ENCODE measurements at regions of chr1 and their contacts with region 1.

Region 1: DNA sequence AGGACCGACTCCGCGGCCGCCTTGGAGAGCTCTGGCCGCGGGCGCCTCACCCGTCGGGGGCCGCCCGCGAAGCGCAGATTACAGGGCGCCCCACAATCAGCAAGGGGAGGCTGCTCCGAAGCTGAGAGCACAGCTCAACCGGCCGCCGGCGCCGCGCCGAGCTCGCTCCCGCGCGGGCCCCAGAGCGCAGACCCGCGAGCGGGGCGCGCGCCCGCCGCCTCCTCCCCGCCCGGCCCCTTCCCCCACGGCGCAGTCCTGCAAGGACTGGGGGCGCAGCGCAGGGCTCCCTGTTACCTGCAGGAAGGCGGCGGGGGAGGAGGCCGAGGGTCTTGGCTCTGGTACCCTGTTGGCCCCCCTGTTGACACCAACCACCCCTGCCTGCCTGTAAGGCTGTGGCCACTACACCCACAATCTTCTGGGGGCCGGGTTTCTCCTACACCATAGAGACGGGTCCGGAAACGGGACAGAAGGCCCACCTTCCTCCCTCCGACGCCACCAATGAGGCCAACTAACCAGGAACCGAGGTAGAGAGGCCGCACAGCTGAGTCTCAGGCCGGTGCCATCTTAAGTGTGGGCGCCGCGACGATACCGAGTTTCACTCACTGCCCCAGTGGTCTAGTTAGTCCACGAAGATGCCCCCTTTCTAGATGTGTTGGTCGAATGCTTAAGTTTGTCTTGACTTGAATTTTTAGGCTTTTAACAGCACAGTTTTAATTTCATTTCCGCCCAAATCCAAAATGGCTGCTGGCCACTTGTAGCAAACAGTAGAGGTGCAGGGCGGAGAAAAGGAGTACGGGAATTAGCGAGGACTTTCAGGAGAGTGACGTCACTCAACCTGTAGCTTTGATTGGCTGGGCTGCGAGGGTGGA is at the start of gene SCYL3:
- DNase-seq: peak; percentile 84 to 96
- ATAC-seq: peak; percentile 84 to 95 (median 87)
- H3K4me3 ChIP-seq: peak within 1 kb of the TSS; percentile 94
- H3K4me3 Mint-ChIP-seq: peak within 1 kb of the TSS; percentile 94
- H3K27ac ChIP-seq: peak within 1 kb of the TSS; percentile 91
- H3K27ac Mint-ChIP-seq: peak within 1 kb of the TSS; percentile 100
- H3K4me1 ChIP-seq: peaks cover 20% of the 10 kb centered on the region
- H3K4me1 Mint-ChIP-seq: peaks cover 46 to 49% of the 10 kb centered on the region in 2 donors
- H3K27me3 ChIP-seq: no peaks in the 10 kb centered on the region
- H3K27me3 Mint-ChIP-seq: peaks cover 8 to 12% of the 10 kb centered on the region in 2 donors
- CTCF ChIP-seq: no peak
- total RNA-seq, gene SCYL3: 6.0 to 12.3 (median 7.0) TPM

Region 2: GRCh38 chr1:167936068-167936929 is 1957.4 kb before region 1 on chr1 and contains the start of gene DCAF6:
- intact Hi-C with region 1: loop called (anchors 2 kb)
- DNase-seq: peak; percentile 95 to 99
- ATAC-seq: peak; percentile 81 to 93 (median 84)
- H3K4me3 ChIP-seq: peak within 1 kb of the TSS; percentile 90
- H3K4me3 Mint-ChIP-seq: peak within 1 kb of the TSS; percentile 93
- H3K27ac ChIP-seq: peak within 1 kb of the TSS; percentile 95
- H3K27ac Mint-ChIP-seq: peak within 1 kb of the TSS; percentile 93 to 98
- H3K4me1 ChIP-seq: peaks cover 8% of the 10 kb centered on the region
- H3K4me1 Mint-ChIP-seq: peaks cover 34 to 41% of the 10 kb centered on the region in 2 donors
- H3K27me3 ChIP-seq: no peaks in the 10 kb centered on the region
- H3K27me3 Mint-ChIP-seq: no peaks in the 10 kb centered on the region
- CTCF ChIP-seq: no peak
- total RNA-seq, gene DCAF6: 21.8 to 31.8 (median 27.8) TPM

Region 3: DNA sequence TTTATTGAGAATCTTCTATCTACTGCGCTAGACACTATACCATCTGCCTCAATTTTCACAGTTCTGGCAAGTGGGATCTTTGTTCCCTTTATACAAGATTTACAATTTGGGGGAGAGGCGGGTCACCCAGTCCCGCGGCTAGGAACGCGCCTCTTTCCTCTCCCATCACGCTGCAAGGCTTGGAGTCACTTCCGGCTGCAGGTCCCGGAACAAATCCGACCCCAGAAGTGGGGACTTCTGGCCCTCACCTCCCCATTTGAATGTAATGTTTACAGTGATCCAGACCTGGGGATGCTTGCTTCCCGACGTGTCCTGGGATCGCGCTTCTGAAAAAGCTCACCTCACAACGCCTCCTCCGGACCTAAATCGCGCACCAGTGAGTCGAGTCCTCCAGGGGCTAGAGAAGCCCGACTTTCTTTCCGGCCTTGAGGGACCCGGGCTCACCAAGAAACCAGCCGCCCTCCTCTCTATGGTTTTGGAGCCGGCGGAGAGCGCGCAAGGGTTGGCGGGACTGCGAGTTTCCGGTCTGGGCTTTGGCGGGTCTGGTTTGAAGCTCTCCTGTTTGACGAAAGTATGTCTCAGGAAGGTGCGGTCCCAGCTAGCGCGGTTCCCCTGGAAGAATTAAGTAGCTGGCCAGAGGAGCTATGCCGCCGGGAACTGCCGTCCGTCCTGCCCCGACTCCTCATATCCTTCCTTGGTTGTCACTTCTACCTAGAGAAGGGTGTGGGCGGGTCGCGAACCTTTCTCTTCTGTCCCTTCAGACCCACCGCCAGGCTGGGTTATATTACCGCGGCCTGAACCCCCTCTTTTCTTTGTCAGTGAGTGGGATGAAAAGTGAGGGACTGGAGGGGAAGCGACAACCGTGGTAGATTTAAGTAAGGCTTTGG is 99.0 kb before region 1 on chr1 and contains the start of gene METTL18:
- intact Hi-C with region 1: loop called (anchors 2 kb)
- DNase-seq: peak; percentile 79 to 95
- ATAC-seq: peak; percentile 97 to 99 (median 99)
- H3K4me3 ChIP-seq: peak within 1 kb of the TSS; percentile 89
- H3K4me3 Mint-ChIP-seq: peak within 1 kb of the TSS; percentile 100
- H3K27ac ChIP-seq: peak within 1 kb of the TSS; percentile 82
- H3K27ac Mint-ChIP-seq: peak within 1 kb of the TSS; percentile 96 to 98
- H3K4me1 ChIP-seq: peaks cover 12% of the 10 kb centered on the region
- H3K4me1 Mint-ChIP-seq: peaks cover 40 to 45% of the 10 kb centered on the region in 2 donors
- H3K27me3 ChIP-seq: no peaks in the 10 kb centered on the region
- H3K27me3 Mint-ChIP-seq: no peaks in the 10 kb centered on the region
- CTCF ChIP-seq: no peak
- total RNA-seq, gene METTL18: 4.9 to 10.0 (median 7.2) TPM

Region 4: DNA sequence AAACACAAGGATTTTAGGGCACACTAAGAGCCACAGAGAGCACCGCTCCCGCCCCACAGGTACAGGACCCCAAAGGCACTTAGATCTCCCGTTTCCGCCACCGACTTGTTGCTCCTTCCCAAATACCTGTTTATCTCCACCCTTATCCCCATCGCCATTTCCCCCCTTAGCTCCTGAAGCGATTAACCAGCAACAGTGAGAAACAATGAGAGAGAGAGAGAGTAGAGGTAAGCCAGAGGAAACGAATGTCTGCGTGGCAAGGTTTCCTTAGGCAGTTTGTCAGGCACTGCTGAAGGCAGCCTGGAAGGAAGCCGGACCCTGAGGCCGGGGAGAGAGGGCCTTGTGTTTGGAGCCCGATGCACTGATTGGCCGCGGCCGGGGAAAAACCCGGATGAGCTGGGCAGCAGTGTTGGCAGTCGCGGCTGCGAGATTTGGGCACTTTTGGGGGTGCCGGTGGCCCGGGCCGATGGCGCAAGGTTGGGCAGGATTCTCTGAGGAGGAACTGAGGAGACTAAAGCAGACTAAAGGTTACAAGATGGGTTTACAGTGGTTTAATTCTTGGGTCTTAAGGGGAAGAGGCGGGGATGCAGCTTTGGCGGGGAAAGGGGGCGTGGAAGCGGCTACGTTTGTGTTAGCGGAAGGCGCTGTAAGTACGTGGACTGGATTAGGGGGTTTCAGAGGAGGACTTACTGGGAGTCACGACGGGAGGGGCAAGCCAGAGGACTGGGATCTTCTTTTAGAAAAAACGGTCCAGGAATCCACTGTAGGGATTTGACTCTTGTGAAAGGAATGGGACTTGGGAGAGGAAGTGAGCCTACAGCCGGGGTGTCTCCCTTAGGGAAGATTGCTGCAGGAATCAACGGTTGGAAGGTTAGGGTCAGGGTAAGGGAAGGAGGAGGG is 638.3 kb after region 1 on chr1 and contains the start of gene GORAB:
- intact Hi-C with region 1: loop called (anchors 5 kb)
- DNase-seq: peak; percentile 83 to 91
- ATAC-seq: peak; percentile 95 to 96 (median 96)
- H3K4me3 ChIP-seq: peak within 1 kb of the TSS; percentile 65
- H3K4me3 Mint-ChIP-seq: no peak within 1 kb of the TSS
- H3K27ac ChIP-seq: peak within 1 kb of the TSS; percentile 79
- H3K27ac Mint-ChIP-seq: no peak within 1 kb of the TSS
- H3K4me1 ChIP-seq: peaks cover 5% of the 10 kb centered on the region
- H3K4me1 Mint-ChIP-seq: peaks cover 6 to 11% of the 10 kb centered on the region in 2 donors
- H3K27me3 ChIP-seq: peaks cover 2% of the 10 kb centered on the region
- H3K27me3 Mint-ChIP-seq: peaks cover 0 to 7% of the 10 kb centered on the region in 2 donors
- CTCF ChIP-seq: no peak
- total RNA-seq, gene GORAB: 17.4 to 23.6 (median 20.8) TPM

Region 5: DNA sequence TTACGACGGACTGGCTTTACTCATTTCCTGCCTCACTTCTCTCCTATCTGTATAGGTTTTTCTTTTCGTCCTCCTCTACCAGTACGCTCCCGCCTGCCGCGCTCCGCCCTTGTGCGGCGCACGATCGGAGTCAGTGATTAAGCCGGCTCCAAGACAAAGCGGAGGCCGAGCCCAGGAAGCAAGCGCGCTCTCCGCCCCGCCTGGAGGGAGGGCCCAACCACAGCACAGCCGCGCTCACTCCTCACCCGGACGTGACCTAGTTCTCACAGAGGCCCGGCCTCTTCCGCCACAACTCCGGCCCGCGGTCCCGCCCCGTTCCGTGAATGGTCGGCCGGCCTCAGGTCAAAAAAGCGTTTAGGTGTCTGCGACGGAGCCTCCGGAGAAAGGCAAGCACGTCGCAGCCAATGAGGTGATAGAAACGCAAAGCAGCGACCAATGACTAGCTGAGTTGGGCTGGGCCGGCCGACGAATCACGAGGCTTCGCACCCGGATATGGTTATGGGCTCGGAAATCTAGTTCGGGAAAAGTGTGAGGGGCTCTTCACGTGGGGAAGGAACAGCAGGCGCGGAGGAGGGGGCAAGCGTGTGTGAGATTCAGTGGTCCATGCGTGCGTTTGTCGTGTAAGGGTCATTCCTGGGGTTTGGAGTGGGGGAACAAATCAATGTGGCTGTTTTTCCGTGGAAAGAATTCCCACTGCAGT is 1887.6 kb after region 1 on chr1 and contains the start of gene METTL13:
- intact Hi-C with region 1: loop called (anchors 5 kb)
- DNase-seq: peak; percentile 96 to 99
- ATAC-seq: peak; percentile 92 to 98 (median 93)
- H3K4me3 ChIP-seq: peak within 1 kb of the TSS; percentile 90
- H3K4me3 Mint-ChIP-seq: peak within 1 kb of the TSS; percentile 100
- H3K27ac ChIP-seq: peak within 1 kb of the TSS; percentile 80
- H3K27ac Mint-ChIP-seq: peak within 1 kb of the TSS; percentile 98 to 100
- H3K4me1 ChIP-seq: peaks cover 30% of the 10 kb centered on the region
- H3K4me1 Mint-ChIP-seq: peaks cover 49 to 55% of the 10 kb centered on the region in 2 donors
- H3K27me3 ChIP-seq: no peaks in the 10 kb centered on the region
- H3K27me3 Mint-ChIP-seq: peaks cover 1 to 5% of the 10 kb centered on the region in 2 donors
- CTCF ChIP-seq: no peak
- total RNA-seq, gene METTL13: 12.1 to 23.3 (median 18.2) TPM

Measured in natural killer cell (primary cell).